Brain microvascular endothelial cell (primary cell): ENCODE measurements at regions of chr5 and their contacts with region 1.

Region 1: DNA sequence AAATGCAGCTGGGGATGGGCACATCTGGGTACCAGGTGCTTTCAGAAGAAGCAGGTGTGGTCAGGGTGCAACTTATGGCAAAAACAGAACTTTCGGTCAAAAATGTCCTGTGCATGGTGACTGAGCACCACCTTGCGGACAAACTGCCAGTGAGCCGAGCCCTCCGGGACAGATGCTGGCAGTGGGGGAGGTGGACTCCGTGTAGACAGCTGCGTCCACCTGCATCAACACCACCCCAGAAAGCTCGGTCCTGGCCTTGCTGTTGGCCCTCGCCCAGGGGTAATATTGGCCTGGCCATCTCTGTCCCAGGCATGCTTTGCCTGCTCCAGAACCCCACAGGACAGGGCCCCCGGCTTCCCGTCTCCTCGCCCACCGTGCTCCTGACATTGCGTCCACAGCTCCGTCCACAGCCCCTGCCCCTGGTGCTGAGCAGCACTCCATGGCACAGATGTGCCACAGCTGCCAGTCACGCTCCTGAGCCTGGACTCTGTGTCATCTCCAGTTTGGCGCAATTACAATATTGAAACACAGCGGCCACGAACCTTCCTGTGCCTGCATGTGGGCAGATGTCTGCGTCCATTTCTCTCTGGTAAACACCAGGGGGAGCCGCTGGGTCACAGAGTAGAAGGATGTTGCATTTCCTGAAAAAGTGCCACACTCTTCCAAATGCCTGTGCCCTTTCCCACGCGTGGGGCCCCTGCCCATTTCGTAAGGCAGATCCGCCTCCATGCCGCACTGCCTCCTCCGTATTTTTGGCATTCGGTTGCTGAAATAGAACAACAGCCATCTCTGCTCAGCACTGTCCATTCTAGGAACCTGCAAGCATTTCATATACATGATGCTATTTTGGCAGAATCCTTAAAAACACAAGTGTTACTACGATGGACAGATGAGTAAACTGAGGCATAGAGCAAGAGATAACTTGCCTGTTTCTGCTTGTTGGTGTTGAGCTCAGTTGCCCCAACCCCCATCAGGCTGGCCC is 33.4 kb upstream of the SLC6A19 start:
- DNase-seq: peak; percentile 58
- H3K4me3 ChIP-seq: no peak overlapping the region
- H3K27ac ChIP-seq: no peak overlapping the region
- H3K27me3 ChIP-seq: no peaks in the 10 kb centered on the region
- CTCF ChIP-seq: peak; percentile 84

Region 2: GRCh38 chr5:926417-927171 is 241.4 kb before region 1 on chr5:
- in situ Hi-C with region 1: loop called (anchors 25 kb)
- DNase-seq: no peak
- H3K4me3 ChIP-seq: no peak overlapping the region
- H3K27ac ChIP-seq: no peak overlapping the region
- H3K27me3 ChIP-seq: peaks cover 18% of the 10 kb centered on the region
- CTCF ChIP-seq: peak; percentile 41